ENCODE measurements at regions of chrX and their contacts with region 1.

Region 1: GRCh38 chrX:72620550-72621145 is 48.0 kb upstream of the HDAC8 start:
- DNase-seq: no peak
- H3K4me3 Mint-ChIP-seq: peak overlapping the region; percentile 70
- H3K27ac Mint-ChIP-seq: peak overlapping the region; percentile 97
- H3K4me1 Mint-ChIP-seq: peaks cover 30% of the 10 kb centered on the region
- H3K27me3 Mint-ChIP-seq: no peaks in the 10 kb centered on the region

Region 2: GRCh38 chrX:71482228-71482958 is 1138.3 kb before region 1 on chrX:
- intact Hi-C with region 1: no loop called
- DNase-seq: no peak
- H3K4me3 Mint-ChIP-seq: no peak overlapping the region
- H3K27ac Mint-ChIP-seq: no peak overlapping the region
- H3K4me1 Mint-ChIP-seq: no peaks in the 10 kb centered on the region
- H3K27me3 Mint-ChIP-seq: no peaks in the 10 kb centered on the region

Region 3: GRCh38 chrX:72276478-72276953 is 344.1 kb before region 1 on chrX:
- intact Hi-C with region 1: loop called (anchors 2 kb)
- DNase-seq: no peak
- H3K4me3 Mint-ChIP-seq: peak overlapping the region; percentile 84
- H3K27ac Mint-ChIP-seq: peak overlapping the region; percentile 82
- H3K4me1 Mint-ChIP-seq: peaks cover 36% of the 10 kb centered on the region
- H3K27me3 Mint-ChIP-seq: peaks cover 15% of the 10 kb centered on the region

Region 4: DNA sequence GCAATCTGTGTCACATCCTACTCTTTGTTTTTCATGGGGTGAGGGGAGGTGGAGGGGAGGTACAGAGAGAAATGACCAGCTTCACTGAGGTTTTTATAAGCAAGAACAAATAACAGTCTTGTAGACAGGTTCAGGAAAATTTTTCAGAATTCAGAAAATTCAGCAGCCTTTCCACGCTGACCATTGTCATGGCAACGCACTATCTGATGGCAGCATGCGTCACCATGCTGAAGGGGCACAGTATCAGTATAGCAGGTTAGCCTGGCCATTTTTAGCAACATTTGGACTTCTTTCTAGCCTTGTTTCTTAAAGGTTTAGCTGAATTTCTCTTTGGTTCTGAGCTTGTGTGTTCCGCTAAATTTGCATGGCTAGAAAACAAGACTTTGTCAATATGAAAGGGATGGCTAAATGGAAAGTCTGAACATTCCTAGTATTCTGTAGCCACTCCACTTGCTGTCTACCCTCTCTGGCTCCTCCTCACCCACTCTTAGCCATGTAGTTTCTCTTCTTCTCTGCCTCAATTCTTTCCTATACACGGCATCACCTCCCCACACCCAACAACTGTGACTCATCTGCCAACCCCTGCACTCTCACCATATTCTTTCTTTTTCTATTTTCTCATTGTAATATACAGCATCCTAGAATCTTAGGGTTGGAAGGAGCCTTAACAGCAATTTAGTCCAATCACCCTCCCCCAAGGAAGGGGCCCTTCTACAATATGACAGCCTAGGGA is 272.2 kb before region 1 on chrX:
- intact Hi-C with region 1: loop called (anchors 1 kb)
- DNase-seq: no peak
- H3K4me3 Mint-ChIP-seq: no peak overlapping the region
- H3K27ac Mint-ChIP-seq: peak overlapping the region; percentile 87
- H3K4me1 Mint-ChIP-seq: peaks cover 24% of the 10 kb centered on the region
- H3K27me3 Mint-ChIP-seq: no peaks in the 10 kb centered on the region

Region 5: GRCh38 chrX:72572248-72573157 is 48.1 kb before region 1 on chrX and contains the start of gene HDAC8:
- intact Hi-C with region 1: loop called (anchors 2 kb)
- DNase-seq: peak; percentile 22
- H3K4me3 Mint-ChIP-seq: peak within 1 kb of the TSS; percentile 91
- H3K27ac Mint-ChIP-seq: peak within 1 kb of the TSS; percentile 94
- H3K4me1 Mint-ChIP-seq: peaks cover 6% of the 10 kb centered on the region
- H3K27me3 Mint-ChIP-seq: peaks cover 8% of the 10 kb centered on the region
- total RNA-seq, gene HDAC8: 31.2 and 34.9 TPM in 2 replicates

Region 6: GRCh38 chrX:72604112-72604511 is 16.5 kb before region 1 on chrX:
- intact Hi-C with region 1: loop called (anchors 1 kb)
- DNase-seq: no peak
- H3K4me3 Mint-ChIP-seq: no peak overlapping the region
- H3K27ac Mint-ChIP-seq: no peak overlapping the region
- H3K4me1 Mint-ChIP-seq: peaks cover 14% of the 10 kb centered on the region
- H3K27me3 Mint-ChIP-seq: no peaks in the 10 kb centered on the region

Region 7: DNA sequence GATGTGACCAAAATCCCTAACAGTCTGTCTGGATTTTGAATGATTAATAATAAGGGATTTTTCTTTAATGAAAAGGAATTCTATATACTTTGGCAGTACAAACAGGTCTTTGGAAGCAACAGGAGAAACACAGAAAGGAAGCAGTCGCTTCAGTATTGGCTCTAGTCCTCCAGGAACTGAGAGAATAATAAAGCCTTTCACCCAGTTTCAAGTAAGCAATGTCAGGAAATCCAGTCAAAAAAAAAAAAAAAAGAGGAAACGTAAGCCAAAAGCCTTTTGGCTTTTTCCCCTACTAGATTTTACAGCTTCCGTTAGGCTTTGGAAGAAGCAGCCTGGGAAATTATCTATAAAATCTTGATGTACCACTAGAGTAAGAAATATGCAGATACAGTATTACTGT is 13.7 kb after region 1 on chrX:
- intact Hi-C with region 1: no loop called
- DNase-seq: no peak
- H3K4me3 Mint-ChIP-seq: no peak overlapping the region
- H3K27ac Mint-ChIP-seq: no peak overlapping the region
- H3K4me1 Mint-ChIP-seq: no peaks in the 10 kb centered on the region
- H3K27me3 Mint-ChIP-seq: no peaks in the 10 kb centered on the region

Region 8: GRCh38 chrX:72663737-72664136 is 43.1 kb after region 1 on chrX:
- intact Hi-C with region 1: loop called (anchors 1 kb)
- DNase-seq: no peak
- H3K4me3 Mint-ChIP-seq: no peak overlapping the region
- H3K27ac Mint-ChIP-seq: peak overlapping the region; percentile 57
- H3K4me1 Mint-ChIP-seq: peaks cover 12% of the 10 kb centered on the region
- H3K27me3 Mint-ChIP-seq: no peaks in the 10 kb centered on the region

Region 9: GRCh38 chrX:72714476-72714916 is 93.8 kb after region 1 on chrX:
- intact Hi-C with region 1: loop called (anchors 1 kb)
- DNase-seq: no peak
- H3K4me3 Mint-ChIP-seq: peak overlapping the region; percentile 74
- H3K27ac Mint-ChIP-seq: peak overlapping the region; percentile 67
- H3K4me1 Mint-ChIP-seq: peaks cover 15% of the 10 kb centered on the region
- H3K27me3 Mint-ChIP-seq: peaks cover 2% of the 10 kb centered on the region

Region 10: DNA sequence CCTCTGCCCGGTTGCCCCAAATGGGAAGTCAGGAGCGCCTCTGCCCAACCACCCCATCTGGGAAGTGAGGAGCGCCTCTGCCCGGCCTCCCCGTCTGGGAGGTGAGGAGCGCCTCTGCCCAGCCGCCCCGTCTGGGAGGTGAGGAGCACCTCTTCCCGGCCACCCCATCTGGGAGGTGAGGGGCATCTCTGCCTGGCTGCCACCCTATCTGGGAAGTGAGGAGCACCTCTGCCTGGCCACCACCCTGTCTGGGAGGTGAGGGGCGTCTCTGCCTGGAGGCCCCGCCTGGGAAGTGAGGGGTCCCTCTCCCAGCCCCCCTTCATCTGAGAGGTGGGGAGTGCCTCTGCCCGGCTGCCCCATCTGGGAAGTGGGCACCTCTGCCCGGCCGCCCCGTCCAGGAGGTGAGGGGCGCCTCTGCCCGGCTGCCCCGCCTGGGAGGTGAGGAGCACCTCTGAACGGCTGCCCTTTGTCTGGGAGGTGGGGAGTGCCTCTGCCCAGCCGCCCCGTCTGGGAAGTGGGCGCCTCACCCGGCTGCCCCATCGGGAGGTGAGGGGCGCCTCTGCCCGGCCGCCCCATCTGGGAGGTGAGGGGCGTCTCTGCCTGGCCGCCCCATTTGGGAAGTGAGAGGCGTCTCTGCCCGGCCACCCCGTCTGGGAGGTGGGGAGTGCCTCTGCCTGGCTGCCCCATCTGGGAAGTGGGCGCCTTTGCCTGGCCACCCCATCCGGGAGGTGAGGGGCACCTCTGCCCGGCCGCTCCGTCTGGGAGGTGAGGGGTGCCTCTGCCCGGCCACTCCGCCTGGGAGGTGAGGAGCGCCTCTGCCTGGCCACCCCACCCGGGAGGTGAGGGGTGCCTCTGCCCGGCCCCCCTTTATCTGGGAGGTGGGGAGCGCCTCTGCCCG is 448.1 kb after region 1 on chrX:
- intact Hi-C with region 1: no loop called
- DNase-seq: no peak
- H3K4me3 Mint-ChIP-seq: no peak overlapping the region
- H3K27ac Mint-ChIP-seq: no peak overlapping the region
- H3K4me1 Mint-ChIP-seq: no peaks in the 10 kb centered on the region
- H3K27me3 Mint-ChIP-seq: no peaks in the 10 kb centered on the region